PC-9 (cell line): ENCODE measurements at regions of chr1 and their contacts with region 1.

Region 1: DNA sequence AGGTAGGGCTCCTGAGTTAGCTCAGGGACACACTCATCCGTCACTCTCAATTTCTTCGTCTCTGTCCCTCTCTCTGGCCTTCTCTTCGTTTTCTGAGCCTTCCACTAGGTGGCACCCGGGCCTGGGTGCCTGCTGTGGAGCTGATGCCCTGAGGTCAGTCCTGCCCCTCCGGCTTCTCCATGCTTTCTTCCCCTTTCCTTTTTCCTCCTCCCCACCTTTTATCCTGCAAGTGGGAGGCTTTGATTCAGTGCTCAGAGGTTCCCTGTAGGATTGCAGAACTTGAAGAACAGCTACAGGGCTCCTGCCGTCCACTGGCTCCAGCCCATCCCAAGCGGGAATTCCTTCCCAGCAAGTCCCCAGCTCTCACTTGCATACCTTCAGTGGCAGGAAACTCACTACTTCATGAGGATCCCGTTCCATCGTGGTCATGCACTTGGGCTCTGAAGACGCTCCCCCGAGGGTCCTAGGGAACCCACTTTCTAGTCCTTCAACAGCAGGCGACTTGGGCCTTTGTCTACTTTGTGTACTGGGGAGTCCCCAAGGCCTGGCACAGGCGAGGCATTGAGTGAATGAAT is 45.6 kb downstream of the SRRM1 start:
- DNase-seq: peak in 1 of 2 experiments; percentile 66
- H3K4me3 ChIP-seq: no peak overlapping the region
- H3K27ac ChIP-seq: no peak overlapping the region
- H3K4me1 ChIP-seq: peaks cover 6% of the 10 kb centered on the region; the same call in 1 of the 2 replicates
- H3K27me3 ChIP-seq: no peaks in the 10 kb centered on the region
- CTCF ChIP-seq: peak; percentile 74

Region 2: DNA sequence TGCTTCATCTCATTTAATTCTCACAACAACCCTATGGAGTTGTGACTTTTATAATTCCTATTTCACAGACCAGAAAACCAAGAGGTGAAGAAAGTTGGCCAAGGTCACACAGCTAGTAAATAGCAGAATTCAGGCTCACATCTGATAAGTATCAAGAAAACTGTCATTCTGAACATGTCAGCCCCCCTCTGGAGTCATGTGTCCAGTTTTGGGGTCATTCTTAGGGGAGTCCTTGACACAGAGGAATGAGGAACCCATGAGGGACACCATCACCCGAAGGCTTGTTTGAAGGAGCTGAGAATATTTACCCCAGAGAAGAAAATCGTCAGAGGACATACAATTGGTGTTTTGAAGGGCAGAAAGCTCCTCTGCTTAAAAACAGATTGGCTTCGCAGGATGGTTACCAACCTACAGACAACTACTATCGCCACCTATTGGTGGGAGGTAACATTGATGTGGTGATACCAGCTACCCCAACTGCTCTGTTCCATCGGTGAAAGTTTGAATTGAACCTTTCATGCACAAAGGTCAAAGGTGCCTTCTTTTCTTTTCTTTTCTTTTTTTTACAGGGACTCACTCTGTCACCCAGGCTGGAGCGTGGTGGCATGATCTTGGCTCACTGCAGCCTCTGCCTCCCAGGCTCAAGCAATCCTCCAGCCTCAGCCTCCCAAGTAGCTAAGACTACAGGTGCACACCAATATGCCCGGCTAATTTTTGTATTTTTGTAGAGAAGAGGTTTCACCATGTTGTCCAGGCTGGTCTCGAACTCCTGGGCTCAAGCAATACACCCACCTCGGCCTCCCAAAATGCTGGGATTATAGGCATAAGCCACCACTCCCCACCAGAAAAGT is 101.5 kb before region 1 on chr1:
- CTCF ChIA-PET with region 1: interaction called, 11 read pairs
- POLR2A ChIA-PET with region 1: no interaction called
- intact Hi-C with region 1: no loop called
- DNase-seq: peak; percentile 29 to 37
- H3K4me3 ChIP-seq: no peak overlapping the region
- H3K27ac ChIP-seq: no peak overlapping the region
- H3K4me1 ChIP-seq: no peaks in the 10 kb centered on the region
- H3K27me3 ChIP-seq: no peaks in the 10 kb centered on the region
- CTCF ChIP-seq: peak; percentile 76

Region 3: GRCh38 chr1:24673336-24673735 is 15.4 kb before region 1 on chr1:
- CTCF ChIA-PET with region 1: interaction called, 18 read pairs
- POLR2A ChIA-PET with region 1: interaction called, 10 read pairs
- intact Hi-C with region 1: no loop called
- DNase-seq: no peak
- H3K4me3 ChIP-seq: no peak overlapping the region
- H3K27ac ChIP-seq: no peak overlapping the region
- H3K4me1 ChIP-seq: peaks cover 9% of the 10 kb centered on the region
- H3K27me3 ChIP-seq: no peaks in the 10 kb centered on the region
- CTCF ChIP-seq: no peak

Region 4: GRCh38 chr1:24705260-24706073 is 16.8 kb after region 1 on chr1:
- CTCF ChIA-PET with region 1: interaction called, 7 read pairs
- POLR2A ChIA-PET with region 1: interaction called, 18 read pairs
- intact Hi-C with region 1: no loop called
- DNase-seq: peak; percentile 85 to 93
- H3K4me3 ChIP-seq: peak overlapping the region; percentile 34; the same call in 1 of the 2 replicates
- H3K27ac ChIP-seq: peak overlapping the region; percentile 36
- H3K4me1 ChIP-seq: peaks cover 9% of the 10 kb centered on the region
- H3K27me3 ChIP-seq: no peaks in the 10 kb centered on the region
- CTCF ChIP-seq: no peak

Region 5: DNA sequence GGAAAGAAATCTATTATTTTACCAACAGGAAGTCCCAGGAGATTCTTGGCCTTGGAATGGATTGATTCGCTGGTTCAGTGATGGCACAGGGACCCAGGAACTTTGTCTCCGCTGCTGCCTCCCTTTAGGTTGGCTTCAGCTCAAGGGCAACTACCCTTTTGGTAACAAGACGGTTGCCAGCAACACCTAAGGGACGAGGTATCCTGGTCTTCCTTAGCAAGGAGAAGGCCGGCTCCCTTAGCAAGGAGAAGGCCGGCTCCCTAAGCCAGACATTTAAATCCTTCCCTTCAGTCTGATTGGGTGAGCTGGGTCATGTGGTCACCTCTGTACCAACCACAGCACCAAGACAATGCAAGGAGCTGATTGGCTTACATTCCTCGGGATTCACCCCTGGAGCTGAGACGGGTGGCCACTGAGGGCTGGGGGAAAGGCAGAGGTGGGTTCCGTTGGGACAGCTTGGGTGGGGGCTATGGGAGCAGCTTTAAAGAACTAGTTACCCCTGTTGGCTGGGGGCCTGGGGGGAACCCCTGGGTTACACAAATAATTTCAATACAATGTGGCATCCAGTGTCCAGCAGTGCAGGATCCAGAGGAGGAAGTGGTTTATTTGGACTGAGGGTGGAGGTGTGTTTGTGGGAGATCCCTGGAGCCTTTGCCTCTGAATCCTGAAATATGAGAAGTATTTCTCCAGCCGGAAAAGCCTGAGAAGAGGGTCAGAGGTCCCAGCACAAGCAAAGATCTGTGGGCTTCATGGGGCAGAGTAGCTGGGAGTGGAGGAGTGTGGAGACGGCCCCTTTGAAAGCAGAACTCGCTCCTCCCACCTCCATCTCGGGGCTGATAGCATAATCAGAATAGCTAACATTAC is 35.9 kb after region 1 on chr1:
- CTCF ChIA-PET with region 1: interaction called, 8 read pairs
- POLR2A ChIA-PET with region 1: interaction called, 8 read pairs
- intact Hi-C with region 1: loop called (anchors 1 kb)
- DNase-seq: peak; percentile 86 to 87
- H3K4me3 ChIP-seq: peak overlapping the region; percentile 63; the same call in 1 of the 2 replicates
- H3K27ac ChIP-seq: peak overlapping the region; percentile 87
- H3K4me1 ChIP-seq: peaks cover 22% of the 10 kb centered on the region
- H3K27me3 ChIP-seq: no peaks in the 10 kb centered on the region
- CTCF ChIP-seq: no peak

Region 6: GRCh38 chr1:24830680-24831272 is 142.1 kb after region 1 on chr1:
- CTCF ChIA-PET with region 1: interaction called, 13 read pairs
- POLR2A ChIA-PET with region 1: interaction called, 14 read pairs
- intact Hi-C with region 1: loop called (anchors 2 kb)
- DNase-seq: peak in 1 of 2 experiments; percentile 54
- H3K4me3 ChIP-seq: no peak overlapping the region
- H3K27ac ChIP-seq: no peak overlapping the region
- H3K4me1 ChIP-seq: no peaks in the 10 kb centered on the region
- H3K27me3 ChIP-seq: no peaks in the 10 kb centered on the region
- CTCF ChIP-seq: peak; percentile 80

Region 7: GRCh38 chr1:25889470-25889869 is 1200.8 kb after region 1 on chr1:
- CTCF ChIA-PET with region 1: no interaction called
- POLR2A ChIA-PET with region 1: no interaction called
- intact Hi-C with region 1: no loop called
- DNase-seq: no peak
- H3K4me3 ChIP-seq: no peak overlapping the region
- H3K27ac ChIP-seq: peak overlapping the region; percentile 96
- H3K4me1 ChIP-seq: peaks cover 61% of the 10 kb centered on the region
- H3K27me3 ChIP-seq: no peaks in the 10 kb centered on the region
- CTCF ChIP-seq: peak; percentile 42; the same call in 1 of the 2 replicates